Gastrocnemius medialis (tissue), 4 donors: ENCODE measurements at regions of chr2 and their contacts with region 1.

Region 1: DNA sequence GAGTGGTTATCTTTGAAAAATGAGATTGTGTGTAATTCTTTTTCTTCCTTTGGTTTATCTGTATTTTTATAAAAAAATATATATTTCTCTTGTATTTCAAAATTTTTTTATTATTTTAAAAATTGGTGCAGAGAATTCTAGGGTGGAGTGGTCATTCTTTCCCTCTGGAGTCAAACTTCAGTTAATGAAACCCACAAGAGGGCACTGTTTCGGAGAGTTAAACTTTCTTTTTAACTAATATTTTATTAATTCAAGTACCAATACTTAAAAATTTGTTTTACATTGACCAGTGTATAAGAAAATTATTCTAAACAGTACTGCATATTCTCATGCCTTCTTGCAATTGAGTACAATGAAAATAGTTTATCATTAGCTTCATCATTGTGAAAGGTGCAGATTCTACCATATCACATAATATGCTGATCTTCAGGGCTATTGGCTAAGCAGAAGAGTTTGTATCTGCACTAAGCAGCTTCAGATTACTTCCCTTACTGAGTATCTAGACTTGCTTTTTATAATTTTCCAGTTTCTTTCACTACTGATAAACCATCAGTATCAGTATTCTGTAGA is 50.1 kb downstream of the HS1BP3 start:
- DNase-seq: no peak
- ATAC-seq: no peak
- H3K4me3 ChIP-seq: no peak overlapping the region
- H3K27ac ChIP-seq: peak overlapping the region in 3 of 4 donors; percentile 2 to 9 (median 7)
- H3K4me1 ChIP-seq: peaks cover 44 to 60% of the 10 kb centered on the region in 2 donors
- H3K27me3 ChIP-seq: no peaks in the 10 kb centered on the region
- CTCF ChIP-seq: peak in 4 of 5 experiments; percentile 6 to 43 (median 30)
- POLR2A ChIP-seq: no peak

Region 2: DNA sequence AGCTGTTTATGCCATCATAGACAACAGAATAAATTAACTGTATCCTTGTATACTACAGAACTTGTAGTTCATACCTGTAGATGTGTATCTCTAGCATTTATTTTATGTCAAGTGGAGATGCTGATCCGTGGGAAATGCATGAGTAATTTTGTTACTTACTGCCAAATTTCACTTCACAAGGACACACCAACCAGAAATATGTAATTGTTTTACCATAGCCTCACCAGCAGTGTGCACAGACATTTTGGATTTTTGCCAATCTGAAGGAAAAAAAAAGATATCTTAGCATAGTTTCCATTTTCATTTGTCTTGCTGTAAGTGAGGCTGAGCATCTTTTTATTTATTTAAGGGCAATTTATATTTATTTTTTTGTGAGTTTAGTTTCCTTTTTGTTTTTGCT is 977.4 kb before region 1 on chr2:
- in situ Hi-C with region 1: no loop called
- intact Hi-C with region 1: no loop called
- DNase-seq: no peak
- ATAC-seq: no peak
- H3K4me3 ChIP-seq: no peak overlapping the region
- H3K27ac ChIP-seq: no peak overlapping the region
- H3K4me1 ChIP-seq: no peaks in the 10 kb centered on the region
- H3K27me3 ChIP-seq: no peaks in the 10 kb centered on the region
- CTCF ChIP-seq: no peak
- POLR2A ChIP-seq: no peak

Region 3: DNA sequence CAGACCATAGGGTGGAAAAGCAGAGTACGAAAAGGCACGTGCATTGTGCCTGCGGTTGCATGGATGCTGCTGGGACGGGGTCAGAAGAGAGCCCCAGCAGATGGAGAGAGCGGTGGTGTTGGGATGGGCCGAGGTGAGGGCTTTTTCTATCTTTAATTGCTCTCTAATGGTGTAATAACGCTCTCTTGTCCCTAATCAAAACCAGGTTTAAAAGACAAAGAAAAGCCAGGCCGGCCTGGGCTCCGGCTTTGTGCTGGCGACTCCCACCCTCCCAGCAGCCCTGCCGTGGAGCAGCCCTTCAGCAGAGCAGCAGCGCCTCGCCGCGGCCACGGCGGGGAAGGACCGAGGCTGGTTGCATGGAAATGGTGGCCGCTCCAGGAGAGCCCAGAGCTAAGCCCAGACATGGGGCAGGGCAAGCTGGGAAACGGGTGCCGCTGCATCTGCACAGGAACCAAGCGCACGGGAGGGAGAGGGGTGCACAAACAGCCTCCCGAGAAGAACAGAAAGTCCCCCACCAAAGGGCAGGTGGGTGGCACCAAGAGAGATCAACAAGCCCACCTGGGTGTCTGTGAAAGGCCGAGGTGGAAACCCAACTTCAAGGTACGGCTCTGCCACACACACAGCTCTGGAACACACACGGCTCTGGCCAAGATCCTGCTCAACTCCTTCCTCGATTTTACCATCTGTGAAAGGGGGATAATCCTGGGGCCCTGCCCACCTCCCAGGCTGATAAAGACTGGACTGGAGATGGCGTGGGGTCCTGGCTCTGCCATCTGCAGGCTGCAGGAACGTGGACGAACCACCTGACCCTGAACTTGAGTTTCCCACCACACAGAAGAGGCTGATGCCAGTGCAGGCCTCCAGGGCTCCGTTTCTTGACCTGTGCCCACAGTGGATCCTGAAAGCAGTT is 35.1 kb after region 1 on chr2:
- in situ Hi-C with region 1: no loop called
- intact Hi-C with region 1: loop called (anchors 2 kb)
- DNase-seq: peak; percentile 65 to 81
- ATAC-seq: peak; percentile 85 to 89
- H3K4me3 ChIP-seq: peak overlapping the region in 1 of 4 donors; percentile 33
- H3K27ac ChIP-seq: peak overlapping the region; percentile 28 to 60 (median 48)
- H3K4me1 ChIP-seq: peaks cover 6 to 19% of the 10 kb centered on the region in 2 donors
- H3K27me3 ChIP-seq: no peaks in the 10 kb centered on the region
- CTCF ChIP-seq: peak; percentile 96 to 97 (median 96)
- POLR2A ChIP-seq: no peak

Region 4: GRCh38 chr2:20728114-20728758 is 127.4 kb after region 1 on chr2:
- in situ Hi-C with region 1: no loop called
- intact Hi-C with region 1: no loop called
- DNase-seq: no peak
- ATAC-seq: no peak
- H3K4me3 ChIP-seq: no peak overlapping the region
- H3K27ac ChIP-seq: no peak overlapping the region
- H3K4me1 ChIP-seq: no peaks in the 10 kb centered on the region
- H3K27me3 ChIP-seq: no peaks in the 10 kb centered on the region
- CTCF ChIP-seq: no peak
- POLR2A ChIP-seq: no peak